Naive thymus-derived CD8-positive, alpha-beta T cell (primary cell): ENCODE measurements at regions of chr1 and their contacts with region 1.

Region 1: GRCh38 chr1:95233737-95234500 is at the start of gene RWDD3:
- DNase-seq: peak; percentile 87 to 94 (median 92)
- ATAC-seq: peak; percentile 93 to 95
- H3K4me3 Mint-ChIP-seq: peak within 1 kb of the TSS; percentile 84 to 94 (median 91)
- H3K27ac Mint-ChIP-seq: peak within 1 kb of the TSS; percentile 87 to 96 (median 94)
- H3K4me1 Mint-ChIP-seq: peaks cover 19 to 53% (median 43%) of the 10 kb centered on the region in 4 donors
- H3K27me3 Mint-ChIP-seq: peaks cover 3 to 27% (median 5%) of the 10 kb centered on the region in 5 donors
- polyA plus RNA-seq, gene RWDD3: 33.8 to 54.0 (median 48.2) TPM

Region 2: GRCh38 chr1:95072532-95073419 is 161.1 kb before region 1 on chr1 and contains the start of gene ALG14:
- POLR2A ChIA-PET with region 1: interaction called, 36 read pairs
- DNase-seq: peak; percentile 86 to 98 (median 92)
- ATAC-seq: peak; percentile 93 to 95
- H3K4me3 Mint-ChIP-seq: peak within 1 kb of the TSS; percentile 94 to 99 (median 99)
- H3K27ac Mint-ChIP-seq: peak within 1 kb of the TSS; percentile 96 to 99 (median 99)
- H3K4me1 Mint-ChIP-seq: peaks cover 9 to 20% (median 15%) of the 10 kb centered on the region in 4 donors
- H3K27me3 Mint-ChIP-seq: peaks cover 0 to 11% (median 0%) of the 10 kb centered on the region in 5 donors
- polyA plus RNA-seq, gene ALG14: 2.3 to 4.2 (median 4.0) TPM

Region 3: DNA sequence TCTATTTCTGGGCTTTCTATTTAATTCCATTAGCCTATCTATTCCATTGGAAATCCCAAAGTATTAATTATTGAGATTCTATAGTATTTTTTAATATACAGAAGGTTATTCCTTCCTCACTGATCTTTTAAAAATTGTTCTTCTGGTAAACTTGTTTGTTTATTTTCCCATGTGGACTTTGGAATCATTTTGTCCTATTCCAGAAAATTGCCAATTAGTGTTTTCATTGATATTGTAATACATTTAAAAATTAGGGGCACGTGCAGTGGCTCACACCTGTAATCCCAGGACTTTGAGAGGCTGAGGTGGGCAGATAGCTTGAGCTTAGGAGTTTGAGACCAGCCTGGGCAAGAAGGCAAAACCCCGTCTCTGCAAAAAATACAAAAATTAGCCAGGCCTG is 125.1 kb before region 1 on chr1:
- POLR2A ChIA-PET with region 1: no interaction called
- DNase-seq: no peak
- ATAC-seq: no peak
- H3K4me3 Mint-ChIP-seq: no peak overlapping the region
- H3K27ac Mint-ChIP-seq: no peak overlapping the region
- H3K4me1 Mint-ChIP-seq: no peaks in the 10 kb centered on the region
- H3K27me3 Mint-ChIP-seq: peaks cover 12 to 30% (median 21%) of the 10 kb centered on the region in 5 donors